A549 (cell line): ENCODE measurements at regions of chr7 and their contacts with region 1.

Region 1: DNA sequence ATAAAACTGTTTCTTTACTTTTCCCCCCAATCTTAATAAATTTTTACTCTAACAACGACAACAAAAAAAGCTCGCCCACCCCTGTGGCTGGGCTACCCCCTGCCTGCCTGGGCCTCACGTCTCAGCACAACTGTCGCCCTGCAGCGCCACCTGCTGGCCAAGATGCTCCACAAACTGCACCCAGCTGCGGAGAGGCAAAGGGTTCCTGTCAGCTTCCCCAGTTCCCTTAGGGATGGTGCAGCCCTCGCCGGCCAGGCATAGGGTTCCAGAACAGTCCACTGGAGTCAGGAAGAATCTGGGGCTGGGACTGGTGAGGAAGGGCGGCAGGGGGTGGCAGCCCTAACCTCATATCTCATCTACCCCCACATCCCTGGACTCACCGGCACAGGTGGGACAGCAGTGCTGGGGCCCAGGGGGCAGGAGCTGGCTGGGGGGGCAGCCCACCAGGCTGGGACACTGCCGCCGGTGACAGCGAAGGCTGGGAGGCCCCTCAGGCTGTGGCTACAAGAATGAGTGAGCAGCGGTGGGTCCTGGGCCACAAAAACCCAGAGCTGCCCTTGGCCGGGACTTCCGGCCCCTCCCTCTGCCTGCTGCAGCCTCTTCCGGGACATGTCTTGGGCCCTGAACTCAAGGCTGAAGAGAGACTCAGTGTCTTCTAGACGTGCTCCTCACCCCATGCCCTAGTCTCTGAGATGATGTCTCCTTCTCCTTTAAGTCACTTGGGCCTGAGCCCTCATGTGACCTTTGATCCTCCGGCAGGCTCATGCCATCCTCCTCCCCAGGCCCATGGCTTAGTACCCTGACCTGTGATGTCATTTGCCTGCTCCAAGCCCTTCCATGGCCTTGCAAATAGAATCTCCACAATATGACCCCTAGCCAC is 21.2 kb downstream of the ATP6V1F start:
- DNase-seq: peak; percentile 74 to 93
- ATAC-seq: peak; percentile 41 to 80
- H3K4me3 ChIP-seq: no peak overlapping the region
- H3K27ac ChIP-seq: no peak overlapping the region
- H3K4me1 ChIP-seq: no peaks in the 10 kb centered on the region
- CTCF ChIP-seq: peak; percentile 91
- EP300 ChIP-seq: no peak
- POLR2A ChIP-seq: no peak
- RAD21 ChIP-seq: peak; percentile 76 to 78

Region 2: DNA sequence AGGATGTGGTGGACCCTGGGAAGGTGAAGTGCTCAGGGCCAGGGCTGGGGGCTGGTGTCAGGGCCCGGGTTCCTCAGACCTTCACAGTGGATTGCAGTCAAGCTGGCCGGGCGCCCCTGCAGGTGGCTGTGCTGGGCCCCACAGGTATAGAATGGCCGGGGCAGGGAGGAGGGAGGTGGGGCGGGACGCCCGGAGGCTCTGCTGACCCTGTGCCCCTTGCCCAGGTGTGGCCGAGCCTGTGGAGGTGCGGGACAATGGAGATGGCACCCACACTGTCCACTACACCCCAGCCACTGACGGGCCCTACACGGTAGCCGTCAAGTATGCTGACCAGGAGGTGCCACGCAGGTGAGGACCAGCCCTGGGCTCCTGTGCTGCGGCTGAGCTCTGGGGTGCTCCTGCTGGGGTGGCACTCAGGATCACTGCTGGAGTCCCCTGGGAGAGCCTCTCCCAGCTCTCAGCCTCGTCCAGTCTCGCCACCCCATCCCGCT is 36.1 kb before region 1 on chr7:
- CTCF ChIA-PET with region 1: interaction called, 11 read pairs
- POLR2A ChIA-PET with region 1: no interaction called
- DNase-seq: no peak
- ATAC-seq: 0 out of 6 replicates have a peak, but pooled peaks of 1 of the 2 experiments have one; percentile 7
- H3K4me3 ChIP-seq: no peak overlapping the region
- H3K27ac ChIP-seq: no peak overlapping the region
- H3K4me1 ChIP-seq: no peaks in the 10 kb centered on the region
- CTCF ChIP-seq: no peak
- EP300 ChIP-seq: no peak
- POLR2A ChIP-seq: no peak
- RAD21 ChIP-seq: no peak

Region 3: DNA sequence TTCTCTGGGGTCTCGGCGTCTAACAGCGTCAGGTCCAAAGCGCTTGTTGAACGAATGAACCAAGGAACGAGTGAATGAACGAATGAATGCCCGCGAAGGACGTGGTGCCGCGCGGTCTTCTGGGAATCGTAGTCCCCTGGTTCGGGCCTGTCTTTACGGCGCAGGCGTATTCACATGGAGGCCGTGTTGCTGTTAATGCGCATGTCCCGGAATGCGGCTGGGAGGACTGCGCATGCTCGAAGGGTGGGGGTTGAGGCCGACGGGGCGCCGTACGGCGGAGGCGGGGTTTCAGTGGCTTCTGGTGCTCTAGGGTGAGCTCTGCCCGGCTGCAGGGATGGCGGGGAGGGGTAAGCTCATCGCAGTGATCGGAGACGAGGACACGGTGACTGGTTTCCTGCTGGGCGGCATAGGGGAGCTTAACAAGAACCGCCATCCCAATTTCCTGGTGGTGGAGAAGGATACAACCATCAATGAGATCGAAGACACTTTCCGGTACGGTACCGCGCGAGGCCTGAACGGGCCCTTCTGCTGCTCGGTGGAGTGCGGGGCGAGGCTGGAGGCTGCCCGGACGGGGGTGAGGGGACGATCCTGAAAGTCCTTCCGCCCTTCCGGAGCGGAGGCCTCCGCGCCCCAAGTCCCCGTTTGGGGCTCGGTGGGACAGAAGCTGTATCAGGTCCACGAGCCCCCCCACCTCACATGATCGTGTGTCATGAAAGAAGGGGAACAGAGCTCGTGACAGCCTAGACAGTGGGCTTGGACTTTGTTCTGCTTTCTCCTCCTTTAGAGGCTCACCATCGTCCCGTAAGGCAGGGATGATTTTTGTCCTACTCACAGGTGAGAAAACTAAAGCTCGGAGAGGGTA is 21.1 kb before region 1 on chr7 and contains the start of gene ATP6V1F:
- CTCF ChIA-PET with region 1: interaction called, 225 read pairs
- POLR2A ChIA-PET with region 1: no interaction called
- DNase-seq: peak; percentile 98
- ATAC-seq: peak; percentile 77 to 92
- H3K4me3 ChIP-seq: peak within 1 kb of the TSS; percentile 81
- H3K27ac ChIP-seq: peak within 1 kb of the TSS; percentile 81 to 89
- H3K4me1 ChIP-seq: peaks cover 8% of the 10 kb centered on the region; the same call in 2 of the 3 replicates
- CTCF ChIP-seq: no peak
- EP300 ChIP-seq: no peak
- POLR2A ChIP-seq: peak; percentile 72
- RAD21 ChIP-seq: no peak
- polyA plus RNA-seq, gene ATP6V1F: 155 and 180 TPM in 2 replicates

Region 4: DNA sequence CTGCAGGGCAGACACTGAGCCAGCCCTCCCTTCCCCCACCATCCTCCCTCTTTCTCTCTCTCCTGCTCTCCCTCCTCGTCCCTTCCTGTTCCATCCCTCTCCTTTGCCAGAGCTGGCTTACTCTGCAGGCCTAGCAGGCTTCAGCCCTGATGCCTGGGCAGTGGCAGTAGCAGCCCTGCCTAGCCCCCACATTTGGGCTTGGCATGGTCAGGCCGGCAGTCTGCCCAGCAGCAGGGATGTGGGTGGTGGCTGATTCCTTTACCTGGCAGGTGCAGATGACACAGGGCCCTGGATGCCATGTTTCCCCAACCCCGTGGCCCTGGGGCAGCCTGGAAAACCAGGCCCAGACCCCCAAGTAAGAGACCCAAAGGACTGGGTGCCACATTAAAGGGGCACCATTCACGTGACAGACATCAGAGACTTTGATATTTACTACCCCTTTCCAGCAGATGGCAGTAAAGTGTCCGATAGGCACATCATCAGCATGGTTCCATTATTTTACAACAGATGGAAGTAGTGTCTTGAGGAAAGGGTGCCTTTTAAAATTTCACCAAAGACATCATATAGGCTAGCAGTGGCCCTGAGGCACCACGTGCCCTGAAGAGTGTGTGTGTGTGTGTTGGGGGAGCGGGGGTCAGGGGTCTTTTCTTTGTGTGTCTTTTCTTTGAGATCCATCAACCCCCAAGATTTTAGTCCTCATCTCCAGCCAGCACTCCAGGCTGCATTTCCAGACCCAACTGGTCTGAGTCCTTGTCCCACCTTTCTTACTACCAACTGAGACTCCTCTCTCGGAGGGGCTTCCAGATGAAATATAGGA is 20.7 kb after region 1 on chr7:
- CTCF ChIA-PET with region 1: interaction called, 15 read pairs
- POLR2A ChIA-PET with region 1: interaction called, 9 read pairs
- DNase-seq: peak; percentile 56 to 60
- ATAC-seq: peak; percentile 33 to 82; a peak in 5 of 6 replicates
- H3K4me3 ChIP-seq: no peak overlapping the region
- H3K27ac ChIP-seq: no peak overlapping the region
- H3K4me1 ChIP-seq: peaks cover 16% of the 10 kb centered on the region; the same call in 1 of the 3 replicates
- CTCF ChIP-seq: peak; percentile 65
- EP300 ChIP-seq: no peak
- POLR2A ChIP-seq: no peak
- RAD21 ChIP-seq: peak; percentile 52 to 66

Region 5: GRCh38 chr7:128919881-128920799 is 36.3 kb after region 1 on chr7:
- CTCF ChIA-PET with region 1: interaction called, 10 read pairs
- POLR2A ChIA-PET with region 1: no interaction called
- DNase-seq: no peak
- ATAC-seq: peak in 1 of 2 experiments; percentile 4; a peak in 1 of 6 replicates
- H3K4me3 ChIP-seq: no peak overlapping the region
- H3K27ac ChIP-seq: no peak overlapping the region
- H3K4me1 ChIP-seq: no peaks in the 10 kb centered on the region
- CTCF ChIP-seq: no peak
- EP300 ChIP-seq: no peak
- POLR2A ChIP-seq: no peak
- RAD21 ChIP-seq: no peak

Region 6: DNA sequence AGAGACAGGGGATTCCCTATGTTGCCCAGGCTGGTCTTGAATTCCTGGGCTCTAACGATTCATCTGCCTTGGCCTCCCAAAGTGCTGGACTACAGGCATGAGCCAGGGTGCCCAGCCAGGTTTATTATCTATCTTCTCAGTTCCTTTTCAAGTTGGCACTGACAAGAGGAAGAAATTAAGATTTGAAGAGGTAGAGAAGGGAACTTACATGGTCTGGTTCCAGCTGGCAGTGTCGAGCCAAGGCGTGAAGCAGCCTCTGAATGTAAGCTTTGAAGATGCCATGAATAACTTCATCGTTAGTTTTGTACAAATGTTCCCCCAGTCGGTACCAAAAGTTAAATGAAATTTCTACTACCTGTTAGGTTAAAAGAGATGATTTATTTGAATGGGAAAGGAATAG is 113.3 kb after region 1 on chr7:
- CTCF ChIA-PET with region 1: no interaction called
- POLR2A ChIA-PET with region 1: no interaction called
- DNase-seq: no peak
- ATAC-seq: no peak
- H3K4me3 ChIP-seq: no peak overlapping the region
- H3K27ac ChIP-seq: no peak overlapping the region
- H3K4me1 ChIP-seq: peaks cover 3% of the 10 kb centered on the region; the same call in 1 of the 3 replicates
- CTCF ChIP-seq: no peak
- EP300 ChIP-seq: no peak
- POLR2A ChIP-seq: no peak
- RAD21 ChIP-seq: no peak